ENCODE measurements at regions of chr6 and their contacts with region 1.

Region 1: GRCh38 chr6:110682460-110682853 is 132.8 kb downstream of the CDK19 start:
- DNase-seq: peak; percentile 56
- H3K4me3 ChIP-seq: peak overlapping the region in 1 of 2 experiments; percentile 34; a peak in 2 of 4 replicates
- H3K27ac ChIP-seq: peak overlapping the region in 1 of 2 experiments; percentile 92; a peak in 2 of 4 replicates
- H3K4me1 ChIP-seq: peaks cover 5% of the 10 kb centered on the region in 2 experiments; a peak in 3 of 4 replicates
- H3K27me3 ChIP-seq: no peaks in the 10 kb centered on the region
- CTCF ChIP-seq: peak; percentile 84
- EP300 ChIP-seq: no peak
- RAD21 ChIP-seq: peak; percentile 88

Region 2: DNA sequence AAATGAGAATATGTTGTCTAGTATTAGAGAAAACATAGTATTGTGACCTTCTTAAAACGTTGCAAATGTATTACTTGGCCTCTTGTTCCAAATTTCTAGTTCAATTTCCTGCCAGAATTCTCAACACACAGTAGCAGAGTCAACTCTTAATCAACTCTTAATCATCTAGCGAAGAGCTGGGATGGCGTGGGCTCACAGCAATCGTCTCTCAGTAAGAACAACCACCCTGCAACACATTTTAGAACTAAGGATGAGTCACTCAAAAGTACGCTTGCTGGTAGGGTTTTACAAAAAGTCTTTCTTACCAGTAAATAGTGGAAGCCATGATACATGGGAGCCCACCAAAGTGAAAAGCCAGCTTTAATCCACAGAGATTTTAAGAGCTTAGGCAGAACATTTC is 679.8 kb before region 1 on chr6:
- CTCF ChIA-PET with region 1: no interaction called
- POLR2A ChIA-PET with region 1: no interaction called
- DNase-seq: no peak
- H3K4me3 ChIP-seq: no peak overlapping the region
- H3K27ac ChIP-seq: no peak overlapping the region
- H3K4me1 ChIP-seq: no peaks in the 10 kb centered on the region
- H3K27me3 ChIP-seq: no peaks in the 10 kb centered on the region
- CTCF ChIP-seq: no peak
- EP300 ChIP-seq: no peak
- RAD21 ChIP-seq: no peak

Region 3: DNA sequence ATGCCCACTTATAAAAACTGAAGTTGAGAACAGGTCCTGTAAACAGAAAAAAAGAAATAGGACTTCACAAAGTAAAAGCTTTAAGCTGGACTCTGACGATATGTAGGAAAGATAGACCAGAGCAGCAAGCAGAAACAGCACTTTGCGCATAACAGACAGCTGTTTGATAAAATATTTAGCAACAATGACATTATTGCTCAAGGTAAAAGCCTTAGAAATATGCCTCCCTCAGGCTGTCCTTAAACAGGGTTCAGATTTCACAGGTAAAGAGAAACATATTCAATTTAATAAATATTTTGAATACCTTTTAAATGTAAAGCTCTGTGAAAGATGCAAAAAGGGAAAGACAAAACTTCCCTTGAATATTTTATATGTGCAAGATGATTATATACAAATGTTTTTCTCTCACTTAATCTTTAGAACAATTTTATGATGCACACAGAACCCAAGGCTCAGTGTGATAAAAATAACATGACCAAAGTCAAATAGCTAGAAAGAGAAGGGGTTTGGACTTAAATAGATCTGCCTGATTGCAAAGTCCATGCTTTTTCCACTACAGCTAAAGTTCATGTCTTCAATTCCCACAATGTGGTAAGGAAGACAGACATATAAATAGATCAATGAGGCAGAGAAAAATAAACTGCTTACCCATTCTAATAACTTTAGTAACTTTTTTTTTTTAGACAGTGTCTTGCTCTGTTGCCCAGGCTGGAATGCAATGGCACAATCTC is 11.2 kb before region 1 on chr6:
- CTCF ChIA-PET with region 1: interaction called, 16 read pairs
- POLR2A ChIA-PET with region 1: no interaction called
- DNase-seq: no peak
- H3K4me3 ChIP-seq: no peak overlapping the region
- H3K27ac ChIP-seq: no peak overlapping the region
- H3K4me1 ChIP-seq: no peaks in the 10 kb centered on the region
- H3K27me3 ChIP-seq: no peaks in the 10 kb centered on the region
- CTCF ChIP-seq: no peak
- EP300 ChIP-seq: no peak
- RAD21 ChIP-seq: no peak

Region 4: DNA sequence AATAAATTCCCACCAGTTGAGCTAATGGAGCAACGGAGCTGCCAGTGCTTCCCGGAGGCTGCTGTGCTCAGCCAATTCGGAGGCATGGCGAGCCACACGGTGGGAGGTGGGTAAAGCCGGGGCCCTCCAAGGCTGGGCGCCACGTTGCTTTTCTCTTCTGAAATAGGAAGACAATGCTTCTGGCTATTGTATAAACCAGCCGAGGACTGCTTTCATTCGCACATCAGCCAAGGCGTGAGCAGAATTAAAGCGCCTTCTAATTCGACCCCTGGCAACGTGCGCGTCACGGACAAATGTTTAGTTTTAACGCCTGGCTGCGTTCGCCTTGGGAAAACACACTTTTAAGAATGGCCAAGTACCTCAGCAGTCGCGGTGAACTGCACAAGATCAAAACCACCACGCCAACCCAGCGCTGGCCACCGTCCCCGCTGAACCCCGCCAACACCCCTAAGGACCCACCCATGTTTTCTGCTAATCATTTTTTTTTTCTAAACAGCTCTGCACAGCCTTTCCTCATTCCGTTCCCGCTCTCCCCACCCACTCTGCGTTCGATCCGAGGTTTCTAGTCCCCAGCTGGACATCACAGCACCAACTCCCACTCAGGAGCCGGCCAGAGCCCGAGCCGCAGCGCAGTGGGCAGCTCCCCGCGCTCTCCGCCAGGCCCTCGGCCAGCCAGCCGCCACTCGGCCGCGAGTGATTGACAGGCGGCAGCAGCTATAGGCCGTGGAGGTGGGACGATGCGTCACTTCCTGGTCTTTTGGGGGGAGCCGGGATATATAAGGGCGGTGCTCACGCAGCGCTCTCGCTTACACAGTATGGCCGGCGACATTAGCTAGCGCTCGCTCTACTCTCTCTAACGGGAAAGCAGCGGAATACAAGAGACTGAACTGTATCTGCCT is 191.8 kb after region 1 on chr6 and contains the start of gene AMD1:
- CTCF ChIA-PET with region 1: interaction called, 41 read pairs
- POLR2A ChIA-PET with region 1: interaction called, 13 read pairs
- DNase-seq: peak; percentile 97
- H3K4me3 ChIP-seq: peak within 1 kb of the TSS; percentile 93
- H3K27ac ChIP-seq: peak within 1 kb of the TSS; percentile 91 to 92
- H3K4me1 ChIP-seq: peaks cover 14 to 28% of the 10 kb centered on the region in 2 experiments; a peak in 3 of 4 replicates
- H3K27me3 ChIP-seq: no peaks in the 10 kb centered on the region
- CTCF ChIP-seq: no peak
- EP300 ChIP-seq: no peak
- RAD21 ChIP-seq: no peak
- polyA plus RNA-seq, gene AMD1: 21.1 and 27.1 TPM in 2 replicates

Region 5: DNA sequence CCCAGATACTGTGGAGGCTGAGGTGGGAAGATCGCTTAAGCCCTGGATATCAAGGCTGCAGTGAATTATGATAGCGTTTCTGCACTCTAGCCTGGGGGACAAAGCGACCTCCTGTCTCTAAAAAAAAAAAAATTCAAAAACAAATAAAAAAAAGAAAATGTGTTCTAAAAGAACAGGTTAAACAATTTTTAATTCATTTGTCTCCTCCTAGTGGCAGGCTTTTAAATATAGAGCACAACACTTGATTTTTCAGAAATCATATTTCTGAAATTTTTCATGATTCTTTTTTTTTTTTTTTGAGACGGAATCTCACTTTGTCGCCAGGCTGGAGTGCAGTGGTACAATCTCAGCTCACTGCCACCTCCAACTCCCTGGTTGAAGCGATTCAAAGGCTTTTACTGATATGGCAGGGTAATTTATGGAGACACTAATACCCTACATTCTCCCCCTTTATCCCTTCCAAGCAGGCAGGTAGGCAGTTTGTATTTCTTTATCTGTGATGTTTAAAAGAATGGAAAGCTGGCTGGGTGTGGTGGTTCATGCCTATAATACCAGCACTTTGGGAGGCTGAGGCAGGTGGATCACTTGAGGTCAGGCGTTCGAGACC is 267.3 kb after region 1 on chr6:
- CTCF ChIA-PET with region 1: interaction called, 55 read pairs
- POLR2A ChIA-PET with region 1: interaction called, 3 read pairs
- DNase-seq: peak; percentile 29
- H3K4me3 ChIP-seq: no peak overlapping the region; a peak in 1 of 4 replicates
- H3K27ac ChIP-seq: peak overlapping the region in 1 of 2 experiments; percentile 2; a peak in 1 of 4 replicates
- H3K4me1 ChIP-seq: peaks cover 0 to 18% of the 10 kb centered on the region in 2 experiments; a peak in 1 of 4 replicates
- H3K27me3 ChIP-seq: no peaks in the 10 kb centered on the region
- CTCF ChIP-seq: peak; percentile 75
- EP300 ChIP-seq: no peak
- RAD21 ChIP-seq: peak; percentile 74